PC-9 (cell line): ENCODE measurements at regions of chr5 and their contacts with region 1.

Region 1: DNA sequence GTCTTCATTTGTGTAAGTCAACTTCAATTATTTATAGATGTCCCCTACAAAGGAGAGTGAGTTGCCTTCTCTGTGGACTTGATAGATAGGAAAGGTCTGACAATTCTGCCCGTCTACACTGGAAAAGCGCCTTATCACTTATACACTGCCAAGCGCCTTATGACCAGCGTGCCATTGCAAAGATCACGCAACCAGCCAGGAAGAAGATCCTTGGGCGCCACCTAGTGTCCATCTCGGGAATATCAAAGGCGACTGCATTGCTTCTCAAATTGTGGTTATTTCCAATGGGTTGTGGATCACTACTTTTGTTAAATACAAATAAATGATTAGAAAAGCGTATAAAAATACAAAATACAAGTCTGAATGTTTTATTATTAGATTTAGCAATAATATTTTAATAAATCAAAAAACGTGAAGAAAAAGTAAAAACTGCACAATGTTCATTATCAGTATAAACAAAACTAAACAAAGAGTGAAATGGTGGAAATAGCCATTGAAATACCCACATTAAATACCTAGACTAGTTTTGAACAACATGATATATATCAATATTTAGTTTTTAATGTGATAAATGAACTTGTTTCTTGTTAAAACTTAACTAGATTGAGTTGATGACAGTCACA is 27.8 kb downstream of the SUB1 start:
- DNase-seq: peak; percentile 62 to 86
- H3K4me3 ChIP-seq: no peak overlapping the region
- H3K27ac ChIP-seq: no peak overlapping the region
- H3K4me1 ChIP-seq: no peaks in the 10 kb centered on the region
- H3K27me3 ChIP-seq: no peaks in the 10 kb centered on the region
- CTCF ChIP-seq: peak; percentile 100

Region 2: DNA sequence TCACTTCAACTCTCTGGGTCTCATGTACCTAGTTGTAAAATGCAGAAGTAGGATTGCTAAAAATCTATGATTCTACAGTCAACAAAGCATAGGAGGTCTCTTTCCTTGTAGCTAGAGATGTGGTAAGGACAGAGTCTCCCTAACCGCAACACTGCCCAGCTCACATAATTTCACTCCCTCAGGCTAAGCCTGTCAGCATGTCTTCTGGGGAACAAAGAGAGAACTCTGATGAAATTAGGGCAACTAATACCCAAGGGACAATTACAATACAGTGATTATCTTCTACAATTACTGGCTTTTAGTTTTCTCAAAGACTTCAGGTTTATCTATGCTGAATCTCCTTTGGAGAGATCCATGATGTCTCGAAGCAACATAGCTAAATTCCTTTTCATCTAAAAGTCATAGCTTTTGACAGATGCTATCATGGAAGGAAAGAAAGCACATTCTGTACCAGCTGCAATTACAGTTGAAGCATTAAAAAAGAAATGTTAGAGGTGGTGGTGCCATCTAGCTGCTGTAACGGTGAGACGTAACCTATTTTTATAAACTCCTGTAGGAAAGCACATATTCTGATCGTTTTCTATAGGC is 686.6 kb after region 1 on chr5:
- CTCF ChIA-PET with region 1: no interaction called
- POLR2A ChIA-PET with region 1: no interaction called
- intact Hi-C with region 1: loop called (anchors 10 kb)
- DNase-seq: peak in 1 of 2 experiments; percentile 37
- H3K4me3 ChIP-seq: no peak overlapping the region
- H3K27ac ChIP-seq: no peak overlapping the region
- H3K4me1 ChIP-seq: no peaks in the 10 kb centered on the region; the same call in 1 of the 2 replicates
- H3K27me3 ChIP-seq: no peaks in the 10 kb centered on the region
- CTCF ChIP-seq: peak; percentile 77

Region 3: DNA sequence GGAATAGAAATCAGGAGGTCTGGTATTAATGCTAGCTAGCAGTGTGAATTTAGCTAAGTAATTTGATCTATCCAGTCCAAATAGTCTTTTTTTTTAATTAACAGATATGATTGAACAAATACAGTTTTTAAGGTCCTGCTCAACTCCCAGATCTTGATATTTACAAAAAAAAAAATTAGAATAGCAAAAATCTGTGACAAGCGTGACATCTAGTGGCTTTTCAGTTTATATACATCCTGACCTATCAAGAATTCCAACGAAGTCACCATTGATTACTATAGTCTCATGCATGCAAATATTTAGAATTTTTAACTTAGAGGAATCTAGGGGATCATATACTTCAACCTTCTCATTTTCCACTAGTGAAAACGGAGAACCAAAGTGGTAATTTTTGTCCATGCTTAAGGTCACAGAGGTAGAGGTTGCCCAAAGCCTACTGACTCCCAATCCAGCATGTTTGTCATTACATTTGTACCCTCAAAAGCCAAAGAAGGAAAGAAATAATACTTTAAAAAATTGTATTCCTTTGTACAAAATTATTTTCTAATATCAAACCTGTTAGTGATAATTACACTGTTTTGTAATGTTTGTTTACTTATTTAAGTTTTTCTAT is 810.0 kb after region 1 on chr5:
- CTCF ChIA-PET with region 1: no interaction called
- POLR2A ChIA-PET with region 1: no interaction called
- intact Hi-C with region 1: loop called (anchors 2 kb)
- DNase-seq: no peak
- H3K4me3 ChIP-seq: no peak overlapping the region
- H3K27ac ChIP-seq: no peak overlapping the region
- H3K4me1 ChIP-seq: no peaks in the 10 kb centered on the region
- H3K27me3 ChIP-seq: no peaks in the 10 kb centered on the region
- CTCF ChIP-seq: peak; percentile 84